ENCODE measurements at regions of chr9 and their contacts with region 1.

Region 1: DNA sequence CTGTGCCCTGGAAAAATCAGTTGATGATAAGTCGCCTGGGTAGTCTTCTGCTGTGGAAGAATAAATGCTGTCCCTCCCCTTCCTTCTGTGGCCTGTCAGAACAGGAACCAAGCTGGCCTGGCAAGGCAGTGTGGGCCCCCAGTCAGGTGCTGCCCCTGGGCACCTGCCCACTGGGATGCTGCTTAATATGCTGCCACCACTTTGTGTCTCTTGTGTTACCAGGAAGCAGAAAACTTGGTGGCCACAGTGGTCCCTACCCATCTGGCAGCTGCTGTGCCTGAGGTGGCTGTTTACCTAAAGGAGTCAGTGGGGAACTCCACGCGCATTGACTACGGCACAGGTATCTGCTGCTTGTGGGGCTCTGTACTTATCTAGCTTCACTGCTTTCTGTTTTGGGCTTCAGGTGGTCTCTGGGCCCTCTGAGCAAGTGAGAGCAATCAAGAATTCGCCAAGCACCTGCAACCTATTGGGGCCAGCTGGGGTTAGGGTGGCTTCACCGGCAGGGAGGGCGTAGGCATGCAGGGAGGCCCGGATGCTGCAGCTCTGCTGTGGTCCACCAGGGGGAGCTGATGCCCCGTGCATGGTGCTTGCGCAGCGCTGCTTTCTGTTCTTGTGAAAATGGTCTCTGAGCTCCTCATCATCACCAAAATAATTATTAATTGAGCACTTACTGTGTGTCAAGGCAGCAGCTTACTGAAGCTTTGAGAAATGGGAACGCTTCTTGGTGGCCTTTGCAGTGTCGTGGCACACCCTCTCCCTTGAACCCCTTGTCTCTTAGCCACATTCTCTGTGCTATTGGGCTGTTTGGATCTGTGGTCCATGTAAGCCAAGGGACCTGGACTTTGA is 20.3 kb downstream of the PTPA start:
- DNase-seq: peak; percentile 76 to 91 (median 84)
- ATAC-seq: peak; percentile 99
- H3K4me3 ChIP-seq: no peak overlapping the region
- H3K4me3 Mint-ChIP-seq: no peak overlapping the region
- H3K27ac ChIP-seq: peak overlapping the region in 1 of 2 donors; percentile 22
- H3K27ac Mint-ChIP-seq: no peak overlapping the region
- H3K4me1 ChIP-seq: peaks cover 12% of the 10 kb centered on the region
- H3K4me1 Mint-ChIP-seq: peaks cover 7% of the 10 kb centered on the region
- H3K27me3 ChIP-seq: no peaks in the 10 kb centered on the region
- H3K27me3 Mint-ChIP-seq: no peaks in the 10 kb centered on the region
- CTCF ChIP-seq: peak; percentile 99

Region 2: DNA sequence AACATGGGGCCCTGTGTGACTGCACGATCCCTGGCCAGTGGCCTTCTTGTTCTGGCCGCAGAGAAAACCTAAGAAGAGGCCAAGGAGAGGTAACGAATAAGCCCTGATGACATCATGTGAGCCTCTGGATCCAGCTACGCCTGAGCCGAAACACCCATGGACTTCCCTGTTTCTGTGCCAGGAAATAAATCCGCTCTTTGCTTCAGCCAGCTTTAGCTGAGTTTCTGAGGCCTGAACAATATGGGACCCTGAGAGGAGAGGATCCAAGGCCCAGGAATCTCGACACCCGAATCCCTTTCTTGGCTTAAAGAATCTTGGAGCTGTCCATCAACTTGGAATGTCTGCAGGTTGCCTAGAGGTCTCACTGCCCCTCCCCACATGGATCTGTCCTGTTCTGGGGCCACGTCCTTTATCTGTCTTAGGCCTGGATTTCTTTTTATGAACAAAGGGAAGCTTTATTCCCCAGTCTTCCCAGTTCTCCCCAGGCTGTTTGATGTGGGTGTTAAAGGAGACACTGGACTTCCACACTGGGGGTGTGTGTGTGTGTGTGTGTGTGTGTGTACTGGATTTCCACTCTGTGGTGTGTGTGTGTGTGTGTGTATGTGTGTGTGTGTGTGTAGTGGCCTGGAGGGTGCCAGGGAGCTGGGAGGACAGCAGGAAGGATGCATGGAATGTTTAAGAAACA is 32.9 kb after region 1 on chr9:
- CTCF ChIA-PET with region 1: no interaction called
- POLR2A ChIA-PET with region 1: no interaction called
- intact Hi-C with region 1: no loop called
- DNase-seq: no peak
- ATAC-seq: no peak
- H3K4me3 ChIP-seq: no peak overlapping the region
- H3K4me3 Mint-ChIP-seq: no peak overlapping the region
- H3K27ac ChIP-seq: no peak overlapping the region
- H3K27ac Mint-ChIP-seq: no peak overlapping the region
- H3K4me1 ChIP-seq: peaks cover 14% of the 10 kb centered on the region
- H3K4me1 Mint-ChIP-seq: peaks cover 11% of the 10 kb centered on the region
- H3K27me3 ChIP-seq: no peaks in the 10 kb centered on the region
- H3K27me3 Mint-ChIP-seq: no peaks in the 10 kb centered on the region
- CTCF ChIP-seq: no peak

Region 3: GRCh38 chr9:129368434-129368978 is 237.0 kb after region 1 on chr9:
- CTCF ChIA-PET with region 1: no interaction called
- POLR2A ChIA-PET with region 1: no interaction called
- intact Hi-C with region 1: no loop called
- DNase-seq: no peak
- ATAC-seq: no peak
- H3K4me3 ChIP-seq: no peak overlapping the region
- H3K4me3 Mint-ChIP-seq: no peak overlapping the region
- H3K27ac ChIP-seq: no peak overlapping the region
- H3K27ac Mint-ChIP-seq: no peak overlapping the region
- H3K4me1 ChIP-seq: no peaks in the 10 kb centered on the region
- H3K4me1 Mint-ChIP-seq: no peaks in the 10 kb centered on the region
- H3K27me3 ChIP-seq: no peaks in the 10 kb centered on the region
- H3K27me3 Mint-ChIP-seq: no peaks in the 10 kb centered on the region
- CTCF ChIP-seq: no peak

Region 4: GRCh38 chr9:129626079-129626624 is 494.6 kb after region 1 on chr9 and contains the start of gene NTMT1:
- CTCF ChIA-PET with region 1: interaction called, 38 read pairs
- POLR2A ChIA-PET with region 1: interaction called, 28 read pairs
- intact Hi-C with region 1: no loop called
- DNase-seq: peak; percentile 85 to 97 (median 90)
- ATAC-seq: peak; percentile 65
- H3K4me3 ChIP-seq: peak within 1 kb of the TSS; percentile 75
- H3K4me3 Mint-ChIP-seq: peak within 1 kb of the TSS; percentile 94
- H3K27ac ChIP-seq: peak within 1 kb of the TSS; percentile 77 to 98
- H3K27ac Mint-ChIP-seq: peak within 1 kb of the TSS; percentile 94
- H3K4me1 ChIP-seq: peaks cover 70% of the 10 kb centered on the region
- H3K4me1 Mint-ChIP-seq: peaks cover 63% of the 10 kb centered on the region
- H3K27me3 ChIP-seq: peaks cover 6 to 10% of the 10 kb centered on the region in 2 experiments
- H3K27me3 Mint-ChIP-seq: peaks cover 13% of the 10 kb centered on the region
- CTCF ChIP-seq: no peak
- total RNA-seq, gene NTMT1: 50.7 to 52.5 TPM

Region 5: GRCh38 chr9:129783516-129784361 is 652.2 kb after region 1 on chr9:
- CTCF ChIA-PET with region 1: interaction called, 13 read pairs
- POLR2A ChIA-PET with region 1: no interaction called
- intact Hi-C with region 1: loop called (anchors 1 to 2 kb)
- DNase-seq: peak; percentile 55 to 84 (median 68)
- ATAC-seq: peak; percentile 100
- H3K4me3 ChIP-seq: no peak overlapping the region
- H3K4me3 Mint-ChIP-seq: no peak overlapping the region
- H3K27ac ChIP-seq: no peak overlapping the region
- H3K27ac Mint-ChIP-seq: no peak overlapping the region
- H3K4me1 ChIP-seq: peaks cover 5% of the 10 kb centered on the region
- H3K4me1 Mint-ChIP-seq: peaks cover 5% of the 10 kb centered on the region
- H3K27me3 ChIP-seq: peaks cover 0 to 2% of the 10 kb centered on the region in 2 experiments
- H3K27me3 Mint-ChIP-seq: peaks cover 8% of the 10 kb centered on the region
- CTCF ChIP-seq: peak; percentile 89

Measured in CD4-positive, alpha-beta T cell (primary cell).